MCF 10A (cell line): ENCODE measurements at regions of chr10 and their contacts with region 1.

Region 1: DNA sequence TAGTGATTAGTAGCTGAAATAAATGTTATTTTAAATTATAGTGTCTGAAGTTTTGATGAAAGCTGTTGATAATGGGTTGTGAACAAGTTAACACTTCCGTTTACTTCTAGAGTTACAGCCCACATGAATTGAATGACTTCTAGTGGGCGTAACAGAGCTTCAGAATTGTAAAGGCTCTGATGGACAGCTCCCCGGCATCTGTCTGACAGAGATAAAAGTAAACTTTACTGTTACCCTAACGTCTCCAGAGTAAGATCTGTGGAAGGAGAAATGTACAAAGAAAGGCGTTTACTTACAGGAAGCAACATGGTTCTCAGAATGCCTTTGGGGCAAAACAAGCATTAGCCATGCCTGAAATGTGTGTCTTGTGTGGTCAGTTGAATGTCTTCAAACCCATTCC is 124.4 kb downstream of the ADARB2 start:
- DNase-seq: no peak
- H3K4me3 Mint-ChIP-seq: no peak overlapping the region
- H3K27ac Mint-ChIP-seq: no peak overlapping the region
- H3K4me1 Mint-ChIP-seq: no peaks in the 10 kb centered on the region
- H3K27me3 Mint-ChIP-seq: no peaks in the 10 kb centered on the region
- CTCF ChIP-seq: no peak

Region 2: GRCh38 chr10:1600861-1601260 is 12.0 kb before region 1 on chr10:
- CTCF ChIA-PET with region 1: interaction called, 4 read pairs
- POLR2A ChIA-PET with region 1: interaction called, 11 read pairs
- intact Hi-C with region 1: no loop called
- DNase-seq: peak; percentile 81
- H3K4me3 Mint-ChIP-seq: no peak overlapping the region
- H3K27ac Mint-ChIP-seq: peak overlapping the region; percentile 58
- H3K4me1 Mint-ChIP-seq: peaks cover 10% of the 10 kb centered on the region
- H3K27me3 Mint-ChIP-seq: no peaks in the 10 kb centered on the region
- CTCF ChIP-seq: no peak